Mammary epithelial cell (primary cell): ENCODE measurements at regions of chr1 and their contacts with region 1.

Region 1: DNA sequence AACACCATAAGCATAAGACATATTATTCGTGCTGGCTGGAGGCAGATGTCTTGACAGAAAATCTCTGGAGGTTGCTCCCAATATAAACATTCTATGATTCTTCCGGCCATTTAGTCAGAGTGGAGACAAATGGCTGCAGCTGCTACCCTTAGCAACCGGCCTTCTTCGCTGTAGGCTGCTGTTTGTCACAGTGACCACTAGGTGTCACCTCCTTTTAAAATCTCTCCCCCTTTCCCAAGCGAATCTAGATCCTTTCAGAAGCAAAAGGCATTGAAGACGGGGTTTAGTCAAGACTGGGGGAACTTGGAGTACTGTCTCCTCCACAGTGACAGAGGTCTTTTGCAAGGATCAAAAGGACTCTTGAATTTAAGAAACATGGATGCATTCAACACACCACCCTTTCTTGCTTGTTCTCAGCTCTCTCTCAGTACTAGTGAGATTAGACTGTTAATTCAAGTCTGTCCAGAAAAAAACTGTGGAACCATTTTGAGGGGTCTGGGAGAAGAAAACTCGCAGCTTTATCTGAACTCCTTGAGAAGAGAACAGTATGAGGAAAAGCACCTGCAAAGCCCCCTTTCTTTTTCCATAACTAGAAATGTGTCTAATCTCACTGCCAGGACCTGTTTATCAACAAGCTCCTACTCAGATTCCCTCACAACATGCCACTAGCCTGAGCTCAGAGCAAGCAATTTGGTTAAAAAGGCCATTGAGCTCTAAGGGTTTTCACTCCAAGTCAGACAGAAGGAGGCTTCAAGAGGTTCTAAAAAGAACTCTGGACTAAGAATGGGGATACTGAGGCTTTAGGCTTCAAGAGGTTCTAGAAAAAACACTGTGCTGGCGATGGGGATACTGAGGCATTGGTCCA is 408.3 kb upstream of the PLXNA2 start:
- DNase-seq: peak; percentile 54
- H3K4me3 ChIP-seq: no peak overlapping the region
- H3K27ac ChIP-seq: no peak overlapping the region
- H3K4me1 ChIP-seq: no peaks in the 10 kb centered on the region
- H3K27me3 ChIP-seq: peaks cover 6% of the 10 kb centered on the region
- CTCF ChIP-seq: peak; percentile 83 to 87

Region 2: GRCh38 chr1:208177656-208178055 is 474.9 kb before region 1 on chr1:
- CTCF ChIA-PET with region 1: no interaction called
- dilution Hi-C with region 1: no loop called
- in situ Hi-C with region 1: no loop called
- intact Hi-C with region 1: no loop called
- DNase-seq: peak; percentile 36
- H3K4me3 ChIP-seq: no peak overlapping the region
- H3K27ac ChIP-seq: no peak overlapping the region
- H3K4me1 ChIP-seq: peaks cover 17% of the 10 kb centered on the region
- H3K27me3 ChIP-seq: no peaks in the 10 kb centered on the region
- CTCF ChIP-seq: no peak

Region 3: DNA sequence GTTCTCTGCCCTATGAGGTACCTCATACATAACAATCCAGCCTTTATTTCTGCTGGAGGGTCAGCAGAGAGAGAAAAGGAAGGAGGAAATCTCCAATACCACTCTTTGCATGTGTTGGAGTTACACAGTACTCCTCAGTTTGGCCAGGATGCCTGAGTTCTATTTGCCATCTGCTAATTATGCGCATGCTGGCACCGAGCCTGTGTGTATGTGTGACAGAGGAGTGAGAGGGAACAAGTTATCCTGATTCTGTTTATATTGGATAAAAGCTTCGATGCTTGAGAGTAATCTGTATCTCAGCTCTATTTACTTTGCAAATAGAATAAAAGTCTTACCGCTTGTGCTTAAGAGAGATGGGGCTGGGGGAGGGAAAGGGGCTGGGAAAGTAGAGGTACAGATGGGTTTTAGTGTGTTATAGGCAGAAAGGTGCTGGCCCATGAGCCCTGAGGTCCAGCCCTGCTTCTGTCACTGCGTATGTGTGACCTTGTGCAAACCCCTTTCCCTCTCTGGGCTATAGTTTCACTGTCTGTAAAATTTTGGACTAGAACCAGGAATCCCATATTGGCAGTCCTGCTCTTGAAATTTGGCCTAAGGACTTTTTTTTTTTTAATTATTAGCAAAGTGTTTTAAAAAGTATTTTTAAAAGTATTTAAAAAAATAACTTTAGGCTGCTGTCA is 353.8 kb before region 1 on chr1:
- CTCF ChIA-PET with region 1: no interaction called
- dilution Hi-C with region 1: no loop called
- in situ Hi-C with region 1: no loop called
- intact Hi-C with region 1: no loop called
- DNase-seq: no peak
- H3K4me3 ChIP-seq: no peak overlapping the region
- H3K27ac ChIP-seq: no peak overlapping the region
- H3K4me1 ChIP-seq: no peaks in the 10 kb centered on the region
- H3K27me3 ChIP-seq: peaks cover 7% of the 10 kb centered on the region
- CTCF ChIP-seq: no peak

Region 4: DNA sequence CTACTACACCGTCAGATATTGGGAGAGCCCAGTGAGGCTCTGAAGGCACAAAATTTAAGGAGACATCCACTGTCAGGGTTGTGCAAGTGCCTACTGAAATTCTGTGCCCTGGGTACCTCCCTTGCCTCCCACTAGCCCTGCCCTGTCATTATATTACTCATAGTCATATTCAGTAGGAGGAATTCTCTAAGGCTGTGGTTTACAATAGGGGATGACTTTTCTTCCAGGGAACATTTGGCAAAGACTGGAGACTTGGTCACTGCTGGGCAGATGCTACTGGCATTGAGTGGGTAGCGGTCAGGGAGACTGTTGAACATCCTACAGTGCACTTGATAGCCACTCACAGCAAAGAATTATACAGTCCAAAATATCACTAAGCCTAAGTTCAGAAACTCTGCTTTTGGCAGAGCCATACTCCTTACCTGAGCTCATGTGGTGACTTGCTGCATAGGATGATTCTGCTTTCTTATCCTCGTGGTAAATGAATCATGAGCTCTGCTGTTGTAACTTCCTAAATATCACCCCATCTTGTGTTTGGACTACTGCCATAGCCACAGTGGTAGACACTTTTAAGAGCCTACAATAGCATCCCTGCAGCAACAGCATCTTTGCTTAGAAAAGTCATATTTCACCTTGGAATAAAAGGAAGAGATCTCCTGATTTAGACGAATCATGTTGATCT is 155.1 kb after region 1 on chr1:
- CTCF ChIA-PET with region 1: no interaction called
- dilution Hi-C with region 1: no loop called
- in situ Hi-C with region 1: no loop called
- intact Hi-C with region 1: loop called (anchors 2 kb)
- DNase-seq: peak; percentile 96
- H3K4me3 ChIP-seq: no peak overlapping the region
- H3K27ac ChIP-seq: peak overlapping the region; percentile 94
- H3K4me1 ChIP-seq: peaks cover 38% of the 10 kb centered on the region
- H3K27me3 ChIP-seq: no peaks in the 10 kb centered on the region
- CTCF ChIP-seq: no peak

Region 5: GRCh38 chr1:208997726-208998312 is 345.3 kb after region 1 on chr1:
- CTCF ChIA-PET with region 1: interaction called, 5 read pairs
- dilution Hi-C with region 1: no loop called
- in situ Hi-C with region 1: loop called in 1 of 2 experiments (anchors 25 kb)
- intact Hi-C with region 1: loop called (anchors 1 kb)
- DNase-seq: no peak
- H3K4me3 ChIP-seq: no peak overlapping the region
- H3K27ac ChIP-seq: no peak overlapping the region
- H3K4me1 ChIP-seq: no peaks in the 10 kb centered on the region
- H3K27me3 ChIP-seq: no peaks in the 10 kb centered on the region
- CTCF ChIP-seq: peak; percentile 46 to 67

Region 6: GRCh38 chr1:209190591-209191261 is 538.2 kb after region 1 on chr1:
- CTCF ChIA-PET with region 1: no interaction called
- dilution Hi-C with region 1: no loop called
- in situ Hi-C with region 1: loop called (anchors 25 kb)
- intact Hi-C with region 1: loop called (anchors 1 kb)
- DNase-seq: peak; percentile 43
- H3K4me3 ChIP-seq: no peak overlapping the region
- H3K27ac ChIP-seq: no peak overlapping the region
- H3K4me1 ChIP-seq: no peaks in the 10 kb centered on the region
- H3K27me3 ChIP-seq: no peaks in the 10 kb centered on the region
- CTCF ChIP-seq: peak; percentile 85 to 90

Region 7: DNA sequence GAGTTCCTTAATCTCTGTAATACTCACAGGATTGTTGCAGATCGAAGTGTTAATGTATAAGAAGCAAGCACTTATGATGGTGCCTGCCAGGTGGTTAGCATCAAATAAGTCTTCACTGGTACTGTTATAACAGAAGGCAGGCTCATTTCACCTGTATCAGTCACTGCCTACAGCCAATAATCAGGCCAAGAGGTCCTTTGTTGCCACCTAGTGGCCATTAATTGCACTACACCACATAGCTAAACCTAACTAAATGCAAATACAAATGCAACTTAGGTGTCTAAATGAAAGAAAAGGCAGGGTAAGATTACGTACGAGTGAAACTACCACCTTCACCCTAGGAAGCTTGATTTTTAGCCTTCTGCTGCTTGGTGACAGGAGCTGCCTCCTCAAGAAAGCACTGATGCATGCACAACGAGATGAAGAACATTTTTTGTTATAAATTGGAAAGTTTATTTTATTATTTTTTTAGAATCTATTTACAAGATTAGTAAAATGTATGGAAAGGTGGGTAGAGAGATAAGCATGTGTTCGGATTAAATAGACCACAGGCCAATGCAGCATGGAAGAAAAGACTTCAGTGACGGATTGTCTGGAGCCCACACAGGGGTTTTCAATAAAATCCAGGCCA is 596.2 kb after region 1 on chr1:
- CTCF ChIA-PET with region 1: no interaction called
- dilution Hi-C with region 1: no loop called
- in situ Hi-C with region 1: no loop called
- intact Hi-C with region 1: loop called (anchors 1 kb)
- DNase-seq: peak; percentile 56
- H3K4me3 ChIP-seq: no peak overlapping the region
- H3K27ac ChIP-seq: no peak overlapping the region
- H3K4me1 ChIP-seq: peaks cover 13% of the 10 kb centered on the region
- H3K27me3 ChIP-seq: no peaks in the 10 kb centered on the region
- CTCF ChIP-seq: peak; percentile 92 to 95